Common myeloid progenitor, CD34-positive (primary cell): ENCODE measurements at regions of chr10 and their contacts with region 1.

Region 1: DNA sequence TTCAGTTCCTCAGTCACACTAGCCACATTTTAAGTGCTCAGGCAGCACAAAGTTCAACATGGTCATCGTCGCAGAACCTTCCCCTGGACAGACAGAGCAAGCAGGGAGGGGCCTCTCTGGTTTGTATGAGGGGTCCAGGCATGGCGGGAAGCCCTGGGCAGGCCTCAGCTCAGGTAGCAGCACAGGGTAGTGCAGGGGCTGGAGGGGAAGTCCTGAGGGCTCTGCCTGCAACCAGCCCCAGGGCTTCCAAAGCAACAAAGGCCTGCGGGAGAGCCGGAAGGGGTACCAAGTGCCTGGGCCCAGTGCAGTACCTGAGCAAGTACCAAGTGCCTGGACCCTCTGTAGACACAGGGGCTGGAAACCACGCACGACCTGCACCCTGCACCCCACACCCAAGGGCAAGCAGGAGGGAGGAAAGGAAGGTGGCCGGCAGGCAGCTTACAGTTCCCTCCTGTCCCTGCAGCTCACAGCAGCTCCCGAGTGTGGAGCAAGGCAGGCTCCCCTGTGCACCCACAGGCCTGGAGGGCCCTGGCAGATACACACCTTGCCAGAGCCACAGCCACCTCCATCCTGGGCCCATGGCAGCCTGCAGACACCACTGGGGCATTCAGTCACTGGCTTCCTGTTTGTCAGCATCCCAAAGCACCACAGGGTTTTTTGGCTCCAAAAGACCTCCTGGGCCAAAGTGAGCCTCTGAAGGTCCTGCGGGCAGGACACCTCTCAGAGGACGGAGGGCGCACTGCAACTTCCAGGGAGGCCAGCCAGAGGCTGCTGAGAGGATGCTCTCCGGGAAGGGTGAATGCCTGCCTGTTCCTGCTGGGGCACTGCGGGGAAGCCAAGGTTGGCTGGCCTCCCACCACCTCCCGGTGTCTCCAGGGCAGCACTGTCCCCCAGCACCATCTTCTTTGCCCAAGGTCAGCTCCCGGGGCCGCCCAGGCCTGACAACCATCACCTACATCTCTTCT is 6.5 kb upstream of the RET start:
- DNase-seq: no peak
- H3K4me3 ChIP-seq: no peak overlapping the region
- H3K27ac ChIP-seq: no peak overlapping the region
- H3K4me1 ChIP-seq: peaks cover 0 to 8% (median 0%) of the 10 kb centered on the region in 4 experiments
- H3K27me3 ChIP-seq: peaks cover 0 to 14% (median 11%) of the 10 kb centered on the region in 5 experiments

Region 2: GRCh38 chr10:43026011-43026973 is 44.1 kb before region 1 on chr10:
- CTCF ChIA-PET with region 1: no interaction called
- POLR2A ChIA-PET with region 1: no interaction called
- DNase-seq: no peak
- H3K4me3 ChIP-seq: no peak overlapping the region
- H3K27ac ChIP-seq: no peak overlapping the region
- H3K4me1 ChIP-seq: peaks cover 0 to 10% (median 4%) of the 10 kb centered on the region in 4 experiments
- H3K27me3 ChIP-seq: no peaks in the 10 kb centered on the region

Region 3: DNA sequence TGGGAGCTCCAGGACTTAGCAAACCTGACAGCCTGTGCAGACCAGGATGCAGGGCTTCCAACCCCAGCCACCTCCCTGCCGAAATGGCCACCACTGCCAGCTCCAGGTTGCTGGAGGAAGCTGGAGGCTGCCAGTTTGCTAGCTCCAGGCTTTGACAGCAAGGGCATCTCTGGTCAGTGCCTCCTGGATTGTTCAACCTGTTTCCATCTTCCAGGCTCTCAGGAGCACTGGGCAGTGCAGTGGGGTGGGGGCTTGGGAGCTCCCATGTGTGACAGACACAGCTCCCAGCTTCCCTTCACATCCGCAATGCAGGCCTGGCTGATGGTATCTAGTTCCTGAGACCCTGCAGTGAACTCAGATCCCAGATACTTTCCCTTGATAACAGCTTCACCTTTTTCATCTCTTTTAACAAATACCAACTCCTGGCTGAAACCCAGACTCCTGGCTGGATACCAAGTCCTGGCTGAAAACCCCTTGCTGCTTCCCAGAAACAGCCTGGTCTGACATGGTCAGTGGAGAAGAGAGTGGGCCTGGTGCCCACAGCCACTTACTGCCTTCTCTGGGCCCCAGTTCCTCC is 14.3 kb before region 1 on chr10:
- CTCF ChIA-PET with region 1: interaction called, 12 read pairs
- POLR2A ChIA-PET with region 1: no interaction called
- DNase-seq: no peak
- H3K4me3 ChIP-seq: no peak overlapping the region
- H3K27ac ChIP-seq: no peak overlapping the region
- H3K4me1 ChIP-seq: peaks cover 0 to 3% (median 0%) of the 10 kb centered on the region in 4 experiments
- H3K27me3 ChIP-seq: peaks cover 0 to 2% (median 0%) of the 10 kb centered on the region in 5 experiments